AG04450 (cell line): ENCODE measurements at regions of chr14 and their contacts with region 1.

Region 1: GRCh38 chr14:76773188-76773885 is 12.1 kb downstream of the VASH1 start:
- DNase-seq: peak; percentile 37
- H3K4me3 ChIP-seq: no peak overlapping the region
- H3K27ac ChIP-seq: peak overlapping the region; percentile 49
- H3K27me3 ChIP-seq: no peaks in the 10 kb centered on the region
- CTCF ChIP-seq: 0 out of 2 replicates have a peak, but pooled peaks have one; percentile 6

Region 2: DNA sequence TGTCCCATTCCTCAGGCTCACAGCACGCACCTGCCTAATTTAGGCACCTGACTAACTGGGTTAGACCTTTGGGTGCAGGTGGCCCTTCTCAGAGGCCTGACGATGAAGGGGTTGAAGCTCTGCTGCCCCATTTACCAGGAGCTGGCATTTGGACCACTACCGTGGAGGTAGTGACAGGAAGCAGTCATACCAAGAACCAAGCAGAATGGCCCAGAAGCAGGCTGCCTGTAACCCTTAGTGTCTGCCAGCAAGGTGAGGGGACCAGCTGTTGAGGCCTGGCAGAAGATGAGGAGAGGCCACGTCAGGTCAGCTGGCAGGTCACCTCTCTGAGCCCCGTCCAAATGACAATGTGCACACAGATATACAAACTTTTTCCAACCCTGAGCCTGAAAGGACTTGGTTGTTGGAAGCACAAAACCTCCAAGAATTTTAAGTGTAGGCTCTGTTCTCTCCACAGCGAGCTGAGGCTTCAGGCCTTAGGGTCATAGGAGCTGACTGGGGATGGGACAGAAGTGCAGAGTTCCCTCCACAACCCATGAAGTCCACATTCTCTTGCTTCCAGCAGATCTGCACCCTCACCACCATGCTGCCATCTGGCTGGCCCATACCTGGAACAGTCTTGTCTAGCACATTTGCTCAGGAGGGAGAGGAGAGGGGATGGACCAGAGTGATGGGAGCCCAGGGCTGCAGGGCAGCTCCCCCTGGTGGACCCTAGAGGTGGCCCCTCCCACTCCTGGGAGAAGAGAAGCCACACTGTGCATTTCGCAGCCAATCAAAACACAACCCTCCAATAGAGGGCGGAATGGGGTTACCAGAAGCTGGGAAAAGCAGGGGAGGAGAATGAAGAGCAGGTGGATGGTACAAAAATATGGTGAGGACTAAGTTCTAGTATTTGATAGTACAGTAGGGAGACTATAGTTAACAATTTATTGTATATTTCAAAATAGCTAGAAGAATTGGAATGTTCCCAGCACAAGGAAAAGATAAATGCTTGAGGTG is 11.2 kb after region 1 on chr14:
- CTCF ChIA-PET with region 1: interaction called, 27 read pairs
- POLR2A ChIA-PET with region 1: no interaction called
- DNase-seq: peak; percentile 34
- H3K4me3 ChIP-seq: no peak overlapping the region
- H3K27ac ChIP-seq: no peak overlapping the region
- H3K27me3 ChIP-seq: no peaks in the 10 kb centered on the region
- CTCF ChIP-seq: peak; percentile 85